Activated naive CD4-positive, alpha-beta T cell treated with anti-CD3 and anti-CD28 coated beads for 36 hours (primary cell): ENCODE measurements at regions of chr1 and their contacts with region 1.

Region 1: DNA sequence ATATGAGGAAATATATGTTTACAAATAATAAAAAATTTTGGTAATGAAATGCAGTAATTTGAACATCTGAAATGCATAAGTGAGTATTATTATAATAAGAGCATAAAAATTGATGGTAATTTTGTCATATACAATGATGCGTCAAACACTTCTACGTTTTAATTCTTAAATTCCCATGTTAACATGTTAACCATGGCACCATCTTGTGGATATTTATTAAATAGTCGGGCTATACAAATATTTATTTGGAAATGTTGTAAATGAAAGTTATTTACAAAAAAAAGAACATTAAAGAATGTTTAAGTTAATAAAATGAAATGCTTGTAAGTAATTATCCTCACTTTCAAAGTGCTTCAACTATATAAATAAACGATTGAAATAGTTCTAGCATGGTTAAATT is 57.2 kb upstream of the C1orf185 start:
- DNase-seq: no peak
- H3K4me3 Mint-ChIP-seq: no peak overlapping the region
- H3K27ac Mint-ChIP-seq: no peak overlapping the region
- H3K4me1 Mint-ChIP-seq: no peaks in the 10 kb centered on the region
- H3K27me3 Mint-ChIP-seq: no peaks in the 10 kb centered on the region

Region 2: DNA sequence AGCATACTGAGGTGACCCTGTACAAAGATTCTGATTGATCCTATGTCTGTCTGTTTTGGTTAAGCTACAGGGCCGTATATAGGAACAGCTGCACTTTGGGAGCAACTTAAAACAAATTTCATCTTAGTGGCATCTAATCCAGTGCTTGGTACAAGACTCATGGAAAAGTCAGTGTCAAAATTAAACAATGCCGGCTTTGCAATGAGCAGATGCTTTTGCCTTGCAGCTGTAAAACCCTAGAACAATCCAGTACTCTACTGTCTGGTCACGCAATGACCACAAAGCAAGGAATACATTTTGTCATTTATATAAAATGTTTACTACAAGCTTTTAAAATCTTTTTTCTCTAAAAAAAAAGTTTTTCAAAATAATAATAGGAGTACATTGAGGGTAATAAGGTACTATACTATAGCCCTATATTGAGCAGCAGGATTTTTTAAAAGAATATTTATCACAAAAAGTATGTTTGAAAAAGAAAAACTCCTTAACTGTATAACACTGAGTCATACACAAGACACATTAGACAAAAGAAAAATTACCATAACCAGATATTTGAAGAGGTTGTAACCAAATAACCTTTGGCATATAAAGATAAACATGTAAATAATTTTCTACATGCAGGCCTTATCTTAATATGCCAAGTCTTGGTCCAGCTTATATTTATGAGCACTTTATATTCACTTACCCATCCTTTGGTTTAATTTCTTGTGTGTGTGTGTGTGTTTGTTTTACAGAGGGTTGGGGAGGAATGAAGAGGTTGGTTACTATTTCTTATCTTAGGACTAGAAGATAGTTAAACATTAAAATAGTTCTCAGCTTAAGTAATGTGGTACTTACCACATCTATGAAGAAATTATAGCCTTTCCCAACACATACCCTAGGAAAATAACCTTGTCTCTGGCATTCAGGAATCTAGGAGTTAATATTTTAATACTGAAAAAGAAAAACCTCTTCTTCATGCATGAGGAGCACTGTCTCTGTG is 347.1 kb before region 1 on chr1:
- CTCF ChIA-PET with region 1: no interaction called
- intact Hi-C with region 1: no loop called
- DNase-seq: no peak
- H3K4me3 Mint-ChIP-seq: no peak overlapping the region
- H3K27ac Mint-ChIP-seq: no peak overlapping the region
- H3K4me1 Mint-ChIP-seq: peaks cover 2% of the 10 kb centered on the region
- H3K27me3 Mint-ChIP-seq: no peaks in the 10 kb centered on the region

Region 3: DNA sequence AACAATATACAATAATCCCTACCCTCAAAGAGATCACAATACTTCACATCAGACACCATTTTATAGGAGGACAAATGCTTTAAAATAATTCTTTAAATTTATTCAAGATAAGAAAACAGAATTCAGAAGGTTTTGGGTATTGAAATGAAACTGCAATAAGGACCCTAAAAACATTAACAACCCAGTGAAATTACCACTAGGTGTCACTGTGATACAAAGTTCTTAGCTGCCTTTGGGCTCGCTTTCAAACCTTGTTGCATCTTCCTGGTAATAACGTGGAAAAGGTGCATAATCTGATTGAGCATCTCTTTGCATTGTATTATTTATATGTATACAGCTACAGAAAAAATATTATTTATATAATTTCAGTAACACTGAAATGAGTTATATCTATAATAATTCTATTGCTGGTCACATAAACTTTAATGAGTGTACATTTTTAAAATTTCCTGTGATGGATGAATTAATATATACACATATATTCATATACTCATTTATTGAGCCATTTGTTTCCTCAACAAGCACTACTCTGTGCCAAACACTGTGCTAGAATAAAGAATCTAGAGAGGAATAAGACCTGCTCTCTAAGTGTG is 270.0 kb before region 1 on chr1:
- CTCF ChIA-PET with region 1: no interaction called
- intact Hi-C with region 1: loop called (anchors 1 kb)
- DNase-seq: peak; percentile 8
- H3K4me3 Mint-ChIP-seq: no peak overlapping the region
- H3K27ac Mint-ChIP-seq: no peak overlapping the region
- H3K4me1 Mint-ChIP-seq: peaks cover 7% of the 10 kb centered on the region
- H3K27me3 Mint-ChIP-seq: no peaks in the 10 kb centered on the region

Region 4: DNA sequence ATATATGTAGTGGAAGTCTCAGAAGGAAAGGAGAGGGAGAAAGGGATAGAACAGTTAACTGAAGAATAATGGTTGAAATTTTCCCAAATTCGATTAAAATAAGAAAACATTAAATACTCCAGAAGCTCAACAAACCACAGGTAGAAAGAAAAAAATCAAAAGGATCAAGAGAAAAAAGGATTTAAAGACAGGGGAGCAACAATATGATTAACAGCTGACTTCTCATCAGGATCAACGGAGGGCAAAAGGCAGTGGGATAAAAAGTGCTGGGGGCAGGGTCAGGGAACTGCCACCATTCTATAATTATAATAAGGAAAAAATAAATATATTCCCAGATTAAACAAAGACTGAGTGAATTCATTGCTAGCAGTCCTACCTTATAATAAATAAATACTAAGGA is 19.5 kb before region 1 on chr1:
- CTCF ChIA-PET with region 1: no interaction called
- intact Hi-C with region 1: no loop called
- DNase-seq: no peak
- H3K4me3 Mint-ChIP-seq: no peak overlapping the region
- H3K27ac Mint-ChIP-seq: no peak overlapping the region
- H3K4me1 Mint-ChIP-seq: no peaks in the 10 kb centered on the region
- H3K27me3 Mint-ChIP-seq: no peaks in the 10 kb centered on the region

Region 5: DNA sequence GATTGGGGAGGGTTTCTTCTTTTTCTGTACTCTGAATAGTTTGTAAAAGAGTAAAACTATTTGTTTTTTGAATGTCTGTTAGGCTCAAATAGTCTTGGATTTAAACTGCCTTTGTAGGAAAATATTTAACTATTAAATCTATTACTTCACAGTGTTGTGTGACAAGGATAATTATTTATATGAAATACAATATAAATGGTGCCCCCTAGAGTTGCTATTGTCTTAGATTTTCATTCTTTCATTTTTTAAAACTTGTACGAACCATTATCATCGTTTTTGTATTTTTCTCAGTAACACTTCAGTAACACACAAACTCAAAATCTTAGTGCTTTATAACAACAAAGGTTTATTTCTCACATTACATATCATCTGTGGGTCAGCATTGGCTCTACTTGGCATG is 94.6 kb after region 1 on chr1:
- CTCF ChIA-PET with region 1: no interaction called
- intact Hi-C with region 1: no loop called
- DNase-seq: no peak
- H3K4me3 Mint-ChIP-seq: no peak overlapping the region
- H3K27ac Mint-ChIP-seq: no peak overlapping the region
- H3K4me1 Mint-ChIP-seq: no peaks in the 10 kb centered on the region
- H3K27me3 Mint-ChIP-seq: peaks cover 14% of the 10 kb centered on the region